ENCODE measurements at regions of chr3 and their contacts with region 1.

Region 1: GRCh38 chr3:43286115-43286840 is at the start of gene SNRK:
- DNase-seq: peak; percentile 94
- ATAC-seq: peak; percentile 95
- total RNA-seq, gene SNRK: 18.9 TPM

Region 2: GRCh38 chr3:43215663-43216275 is 70.5 kb before region 1 on chr3:
- intact Hi-C with region 1: loop called (anchors 10 kb)
- DNase-seq: no peak
- ATAC-seq: no peak

Region 3: GRCh38 chr3:43326891-43327581 is 40.8 kb after region 1 on chr3:
- intact Hi-C with region 1: loop called (anchors 5 kb)
- DNase-seq: no peak
- ATAC-seq: peak; percentile 86

Region 4: GRCh38 chr3:43481325-43481860 is 195.1 kb after region 1 on chr3:
- intact Hi-C with region 1: loop called (anchors 5 kb)
- DNase-seq: no peak
- ATAC-seq: no peak